ENCODE measurements at regions of chr1 and their contacts with region 1.

Region 1: DNA sequence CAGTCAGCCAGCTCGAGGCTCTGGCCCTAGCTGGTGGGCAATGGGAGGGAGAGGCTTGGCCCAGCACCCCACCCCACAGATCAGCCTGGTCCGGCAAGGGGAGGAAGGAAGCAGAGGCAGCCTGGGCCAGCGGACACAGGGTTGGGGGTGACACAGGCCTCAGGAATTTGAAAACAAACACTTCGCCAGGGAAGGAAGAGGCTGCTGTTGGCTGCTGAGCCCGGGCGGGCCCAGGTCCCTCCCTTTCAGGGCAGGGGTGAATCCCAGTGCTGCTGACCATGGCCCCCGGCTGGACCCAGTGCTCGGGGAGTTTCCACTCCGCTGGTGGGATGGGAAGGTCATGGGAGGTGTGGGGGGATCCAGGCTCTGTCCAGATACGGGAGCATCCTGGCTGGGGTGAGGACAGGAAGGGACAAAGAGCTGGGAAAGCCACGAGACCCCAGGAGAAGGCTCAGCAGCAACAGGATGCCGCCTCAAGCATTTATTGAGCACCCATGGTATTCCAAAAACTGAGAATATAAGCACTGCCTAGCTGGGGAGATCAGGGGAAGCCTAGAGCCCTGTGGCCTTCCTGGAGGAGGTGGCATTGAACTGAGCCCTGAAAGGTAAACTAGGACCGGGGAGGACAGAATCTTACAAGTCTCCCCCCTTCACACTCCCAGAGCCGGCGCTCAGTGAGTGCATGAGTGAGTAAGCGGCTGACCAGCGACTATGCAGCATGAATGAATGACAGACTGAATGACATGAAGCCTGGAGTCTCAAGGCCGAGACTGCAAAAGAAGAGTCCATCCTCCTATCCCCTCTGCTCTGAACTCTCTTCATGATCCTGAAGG is 26.2 kb upstream of the EPHA2 start:
- DNase-seq: peak; percentile 58 to 82
- H3K4me3 ChIP-seq: no peak overlapping the region
- H3K27ac ChIP-seq: peak overlapping the region; percentile 70; the same call in 1 of the 2 replicates
- H3K4me1 ChIP-seq: peaks cover 4 to 11% (median 8%) of the 10 kb centered on the region in 4 experiments; a peak in 6 of 7 replicates
- H3K27me3 ChIP-seq: no peaks in the 10 kb centered on the region; a peak in 1 of 7 replicates
- CTCF ChIP-seq: no peak
- EP300 ChIP-seq: 0 out of 3 replicates have a peak, but pooled peaks of 1 of the 2 experiments have one; percentile 14
- POLR2A ChIP-seq: peak in 1 of 2 experiments; percentile 69; a peak in 2 of 3 replicates
- RAD21 ChIP-seq: no peak

Region 2: DNA sequence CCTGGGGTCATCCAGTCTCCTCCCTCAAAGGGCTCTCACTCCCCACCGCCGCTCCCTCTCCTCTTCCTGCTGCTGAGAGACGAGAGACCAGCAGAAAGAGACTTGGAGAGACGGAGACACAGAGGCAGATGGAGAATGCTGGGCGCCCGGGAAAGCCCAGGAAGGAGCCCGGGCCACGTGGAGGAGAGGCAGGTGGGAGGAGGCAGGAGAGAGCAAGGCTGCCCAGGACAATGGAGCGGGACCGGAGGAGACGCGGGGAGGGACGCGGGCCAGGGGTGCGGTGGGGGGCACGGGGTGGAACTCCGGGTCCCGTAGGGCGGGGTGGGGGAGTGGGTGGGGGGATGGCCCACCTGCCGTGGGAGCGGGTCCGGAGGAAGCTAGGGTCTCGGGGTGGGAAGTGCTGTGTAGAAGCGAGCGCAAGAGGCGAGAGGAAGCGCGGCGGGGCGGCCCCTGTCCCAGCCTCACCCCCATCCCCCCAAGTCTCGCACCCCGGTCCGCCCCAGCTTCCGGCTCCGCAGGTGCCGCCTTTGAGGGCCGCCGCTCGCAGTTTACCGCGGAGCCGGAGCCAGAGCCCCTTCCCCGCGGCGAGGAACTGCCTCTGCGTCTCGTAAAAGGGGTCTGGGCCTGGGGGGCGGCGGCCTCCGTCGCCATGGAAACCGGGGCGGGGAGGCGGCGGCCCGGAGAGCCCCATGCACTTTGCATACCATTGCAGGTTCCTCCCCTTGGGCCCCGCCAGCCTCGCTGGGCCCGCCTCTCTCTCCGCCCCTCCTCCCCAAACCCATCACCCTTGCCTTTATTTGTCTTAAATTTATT is 14.6 kb before region 1 on chr1:
- CTCF ChIA-PET with region 1: interaction called, 7 read pairs
- POLR2A ChIA-PET with region 1: interaction called, 17 read pairs
- DNase-seq: peak; percentile 82 to 91
- H3K4me3 ChIP-seq: peak overlapping the region; percentile 36 to 68 (median 42)
- H3K27ac ChIP-seq: peak overlapping the region; percentile 43; the same call in 1 of the 2 replicates
- H3K4me1 ChIP-seq: peaks cover 4 to 22% (median 12%) of the 10 kb centered on the region in 4 experiments
- H3K27me3 ChIP-seq: no peaks in the 10 kb centered on the region; a peak in 2 of 7 replicates
- CTCF ChIP-seq: no peak
- EP300 ChIP-seq: 0 out of 3 replicates have a peak, but pooled peaks of 1 of the 2 experiments have one; percentile 12
- POLR2A ChIP-seq: peak in 1 of 2 experiments; percentile 66; a peak in 2 of 3 replicates
- RAD21 ChIP-seq: no peak

Region 3: GRCh38 chr1:16266411-16267118 is 84.5 kb after region 1 on chr1:
- CTCF ChIA-PET with region 1: no interaction called
- POLR2A ChIA-PET with region 1: no interaction called
- DNase-seq: no peak
- H3K4me3 ChIP-seq: no peak overlapping the region
- H3K27ac ChIP-seq: no peak overlapping the region
- H3K4me1 ChIP-seq: no peaks in the 10 kb centered on the region
- H3K27me3 ChIP-seq: no peaks in the 10 kb centered on the region
- CTCF ChIP-seq: no peak
- EP300 ChIP-seq: no peak
- POLR2A ChIP-seq: no peak
- RAD21 ChIP-seq: no peak

Measured in H1 (cell line).